Activated T-helper 1 cell treated with anti-CD3 and anti-CD28 coated beads, Interleukin-12 subunit alpha, Interleukin-12 subunit beta, Interleukin-2, Interleukin-4 antibody, amounts not matched to agents 30 ng/mL and 10 ng/mL and 1 ng/mL, durations not matched to agents 14 hours and 24 hours and 36 hours (primary cell): ENCODE measurements at regions of chr2 and their contacts with region 1.

Region 1: DNA sequence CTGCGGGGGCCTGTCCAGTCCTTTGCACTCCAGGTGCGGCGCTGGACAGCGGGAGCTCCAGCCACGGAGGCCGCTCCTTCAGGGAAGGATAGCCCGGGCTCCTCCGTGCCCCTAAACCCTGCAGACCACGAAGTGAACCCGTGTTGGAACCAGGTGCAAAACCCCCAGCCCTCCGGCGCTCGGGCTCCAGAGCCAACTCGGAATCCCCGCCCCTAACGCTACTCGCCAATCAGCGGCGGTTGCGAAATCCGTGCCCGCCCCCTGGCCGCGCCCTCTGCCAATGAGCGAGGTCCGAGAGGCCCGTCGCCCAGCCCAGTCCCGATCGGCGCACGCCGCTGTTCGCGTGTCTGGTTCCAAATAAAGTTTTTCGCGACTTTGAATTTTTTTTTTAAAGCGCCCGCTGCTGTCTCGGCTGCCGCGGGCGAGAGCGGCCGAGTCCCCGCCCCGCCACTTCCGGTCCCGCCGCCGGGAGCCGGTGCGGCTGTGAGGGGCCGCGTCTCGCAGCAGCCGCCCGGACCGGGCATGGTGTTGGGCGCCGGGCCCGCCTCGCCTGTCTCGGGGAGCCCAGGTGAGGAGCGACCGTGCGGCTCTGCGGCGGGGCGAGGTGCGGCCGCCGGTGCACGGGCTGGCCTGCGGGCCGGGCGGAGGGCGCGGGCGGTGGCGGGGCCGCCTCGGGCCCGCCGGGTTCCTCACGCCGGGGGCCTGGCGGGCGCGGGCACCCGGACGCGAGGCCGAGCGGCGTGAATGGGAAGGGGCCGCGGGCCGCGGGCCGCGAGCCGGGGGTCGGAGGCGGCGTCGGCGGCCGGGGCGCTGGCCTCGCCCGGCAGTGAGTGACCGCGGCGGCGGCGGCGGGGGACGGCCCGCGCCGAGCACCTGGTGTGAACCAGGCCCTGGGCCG is at the start of gene UBE2F:
- DNase-seq: peak; percentile 98
- H3K4me3 Mint-ChIP-seq: peak within 1 kb of the TSS; percentile 90
- H3K27ac Mint-ChIP-seq: peak within 1 kb of the TSS; percentile 85
- H3K4me1 Mint-ChIP-seq: peaks cover 45% of the 10 kb centered on the region
- H3K27me3 Mint-ChIP-seq: no peaks in the 10 kb centered on the region
- total RNA-seq, gene UBE2F: 121 TPM in 2 replicates

Region 2: DNA sequence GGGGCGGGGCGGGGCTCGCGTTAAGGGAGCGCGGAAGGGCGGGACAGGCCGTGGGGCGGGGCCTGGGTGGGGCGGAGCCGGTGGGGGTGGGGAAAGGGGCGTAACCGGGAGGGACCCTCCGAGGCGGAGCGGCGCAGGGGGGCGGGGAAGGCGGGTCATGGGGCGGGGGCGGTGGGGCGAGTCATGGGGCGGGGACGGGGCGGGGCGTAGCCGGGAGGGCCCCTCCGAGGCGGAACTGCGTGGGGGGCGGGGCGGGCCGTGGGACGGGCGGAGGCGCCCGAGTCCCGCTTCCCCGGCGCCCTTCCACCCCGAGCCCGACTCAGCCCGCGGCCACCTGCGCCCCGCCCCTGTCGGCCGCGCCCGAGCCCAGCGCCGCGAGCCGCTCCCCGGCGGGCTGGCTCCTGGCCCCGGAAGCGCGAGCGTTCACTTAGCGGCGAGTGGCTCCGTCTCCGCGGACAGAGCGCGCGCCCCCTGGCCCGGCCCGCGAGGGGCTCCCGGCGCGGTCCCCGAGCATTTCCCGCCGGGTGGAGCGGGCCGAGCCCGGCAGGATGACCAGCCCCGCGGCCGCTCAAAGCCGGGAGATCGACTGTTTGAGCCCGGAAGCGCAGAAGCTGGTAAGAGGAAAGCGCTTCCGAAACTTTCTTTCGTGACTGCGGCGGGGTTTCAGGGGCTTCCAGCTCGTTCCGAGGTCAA is 274.8 kb before region 1 on chr2:
- intact Hi-C with region 1: loop called (anchors 2 kb)
- DNase-seq: peak; percentile 91
- H3K4me3 Mint-ChIP-seq: peak overlapping the region; percentile 99
- H3K27ac Mint-ChIP-seq: peak overlapping the region; percentile 98
- H3K4me1 Mint-ChIP-seq: peaks cover 67% of the 10 kb centered on the region
- H3K27me3 Mint-ChIP-seq: no peaks in the 10 kb centered on the region

Region 3: GRCh38 chr2:237923481-237924163 is 43.2 kb before region 1 on chr2:
- intact Hi-C with region 1: loop called (anchors 1 kb)
- DNase-seq: peak; percentile 74
- H3K4me3 Mint-ChIP-seq: peak overlapping the region; percentile 70
- H3K27ac Mint-ChIP-seq: peak overlapping the region; percentile 74
- H3K4me1 Mint-ChIP-seq: peaks cover 38% of the 10 kb centered on the region
- H3K27me3 Mint-ChIP-seq: peaks cover 4% of the 10 kb centered on the region

Region 4: GRCh38 chr2:238024986-238025385 is 58.2 kb after region 1 on chr2:
- intact Hi-C with region 1: loop called (anchors 2 kb)
- DNase-seq: peak; percentile 19
- H3K4me3 Mint-ChIP-seq: peak overlapping the region; percentile 8
- H3K27ac Mint-ChIP-seq: peak overlapping the region; percentile 82
- H3K4me1 Mint-ChIP-seq: peaks cover 34% of the 10 kb centered on the region
- H3K27me3 Mint-ChIP-seq: no peaks in the 10 kb centered on the region

Region 5: DNA sequence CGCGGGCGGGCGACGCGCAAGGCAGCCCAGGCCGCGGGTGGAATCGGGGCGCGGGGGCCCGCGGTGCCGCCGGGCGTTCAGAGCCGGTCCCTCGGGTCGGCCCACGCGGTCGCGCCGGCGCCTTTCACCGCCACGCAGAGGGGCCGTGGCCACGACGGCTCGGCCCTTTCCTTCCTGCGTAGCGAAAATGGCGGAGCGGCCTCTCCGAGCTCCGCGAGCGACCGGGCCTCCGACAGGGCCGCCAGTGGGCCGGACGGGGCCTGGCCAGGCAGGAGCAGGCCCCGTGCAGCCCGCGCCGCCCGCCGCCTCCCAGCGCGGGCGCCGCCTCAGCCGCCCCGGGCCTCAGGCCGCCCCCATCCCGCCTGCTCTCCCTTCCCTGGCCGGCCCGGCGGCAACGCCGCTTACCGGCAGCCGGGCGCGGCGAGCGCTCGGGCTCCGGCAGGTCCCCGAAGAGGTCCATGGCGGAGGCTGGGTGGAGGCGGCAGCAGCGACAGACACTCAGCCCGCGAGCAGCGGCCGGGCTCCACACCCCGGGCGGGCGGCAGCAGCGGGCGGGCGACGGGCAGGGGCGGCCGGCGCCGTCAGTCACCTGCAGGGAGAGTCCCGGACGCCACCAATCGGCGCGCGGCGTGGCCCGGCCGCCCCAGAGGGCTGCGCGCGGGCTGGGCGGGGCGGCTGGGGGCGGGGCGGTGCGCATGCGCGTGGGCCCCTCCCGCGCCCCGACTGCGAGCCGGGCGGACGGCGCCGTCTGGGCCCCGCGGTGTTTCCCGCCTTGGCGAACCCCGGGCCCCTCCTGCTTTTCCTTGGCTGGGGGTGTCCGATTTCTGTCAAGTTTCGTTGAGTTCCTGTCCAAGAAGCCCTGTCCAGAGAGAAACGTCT is 236.5 kb after region 1 on chr2 and contains the start of gene ILKAP:
- intact Hi-C with region 1: loop called (anchors 1 kb)
- DNase-seq: peak; percentile 88
- H3K4me3 Mint-ChIP-seq: peak within 1 kb of the TSS; percentile 89
- H3K27ac Mint-ChIP-seq: peak within 1 kb of the TSS; percentile 89
- H3K4me1 Mint-ChIP-seq: peaks cover 45% of the 10 kb centered on the region
- H3K27me3 Mint-ChIP-seq: no peaks in the 10 kb centered on the region
- total RNA-seq, gene ILKAP: 77.3 and 79.9 TPM in 2 replicates

Region 6: DNA sequence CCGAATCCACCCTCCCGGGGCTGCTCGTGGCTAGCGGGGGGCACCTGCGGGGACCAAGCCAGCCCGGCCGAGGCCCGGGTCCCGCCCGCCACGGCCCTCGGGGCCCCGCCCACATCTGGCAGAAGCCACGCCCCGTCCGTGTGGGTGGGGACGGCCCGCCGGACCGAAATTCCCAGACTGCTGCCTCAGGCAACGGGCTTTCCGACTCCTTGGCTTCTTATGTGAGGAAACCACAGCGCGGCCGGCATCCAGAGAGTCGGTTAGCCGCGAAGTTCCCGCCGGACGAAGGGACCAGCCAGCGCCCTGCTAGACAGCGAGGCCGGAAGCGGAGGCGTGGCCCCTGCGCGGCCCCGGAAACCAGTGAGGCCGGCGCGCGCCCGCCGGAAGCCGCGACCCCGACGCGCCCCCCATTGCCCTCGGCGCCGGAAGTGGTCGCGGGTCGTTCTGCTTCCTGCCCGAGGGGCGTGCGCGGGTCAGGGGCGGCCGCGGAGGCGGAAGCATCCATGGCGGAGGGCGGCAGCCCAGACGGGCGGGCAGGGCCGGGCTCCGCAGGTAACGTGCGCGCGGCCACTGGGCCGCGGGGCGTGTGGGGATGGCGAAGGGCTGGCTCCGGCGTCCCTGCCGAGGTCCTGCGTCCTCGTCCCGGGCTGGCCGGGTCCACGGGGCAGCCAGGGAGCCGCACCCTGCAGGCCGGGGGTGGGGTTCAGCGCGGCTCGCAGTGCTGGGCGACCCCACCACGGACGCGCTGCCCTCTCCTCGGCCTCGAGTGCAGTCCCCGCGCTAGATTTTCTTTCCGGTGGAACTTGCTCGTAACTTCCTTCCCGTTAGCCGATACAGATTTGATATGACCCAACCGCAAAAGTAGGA is 460.0 kb after region 1 on chr2 and contains the start of gene ASB1:
- intact Hi-C with region 1: loop called (anchors 5 kb)
- DNase-seq: peak; percentile 77
- H3K4me3 Mint-ChIP-seq: peak within 1 kb of the TSS; percentile 93
- H3K27ac Mint-ChIP-seq: peak within 1 kb of the TSS; percentile 94
- H3K4me1 Mint-ChIP-seq: peaks cover 28% of the 10 kb centered on the region
- H3K27me3 Mint-ChIP-seq: no peaks in the 10 kb centered on the region
- total RNA-seq, gene ASB1: 32.4 and 35.2 TPM in 2 replicates